ENCODE measurements at regions of chr4 and their contacts with region 1.

Region 1: DNA sequence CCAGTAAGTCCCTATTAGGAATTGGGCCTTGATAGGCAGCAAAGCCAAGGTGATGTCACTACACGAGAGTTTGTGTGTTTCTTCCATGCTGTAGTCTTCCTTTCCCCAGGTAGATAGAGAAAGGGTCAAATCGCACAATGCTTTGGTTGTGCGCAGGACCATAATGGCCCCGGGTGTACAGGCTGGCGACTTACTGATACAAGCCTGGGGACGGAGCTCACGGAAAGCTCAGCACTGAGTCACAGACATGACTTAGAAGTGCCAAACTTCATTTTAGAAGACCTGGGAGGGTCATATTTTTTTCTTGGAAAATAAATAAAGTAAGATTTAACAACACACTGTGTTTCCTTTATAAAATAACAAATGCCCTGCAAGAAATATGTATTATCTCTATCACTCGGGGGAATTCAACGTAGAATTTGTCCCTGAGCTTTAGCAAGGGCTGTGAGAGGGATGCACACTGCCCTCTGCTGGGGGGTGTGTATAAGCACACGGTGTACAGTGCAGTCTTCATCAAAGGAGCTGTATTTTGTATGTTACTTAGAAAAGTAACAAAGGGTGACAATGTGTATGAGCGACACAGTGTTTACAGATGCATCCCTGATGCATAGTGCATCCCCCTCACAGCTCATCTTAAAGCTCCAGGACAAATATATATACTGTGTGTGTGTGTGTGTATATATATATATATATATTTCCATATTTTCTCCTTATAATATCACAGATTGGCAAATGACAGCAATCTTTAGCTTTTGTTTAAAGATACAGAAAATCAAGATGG is 254.5 kb upstream of the VEGFC start:
- DNase-seq: peak; percentile 56

Region 2: DNA sequence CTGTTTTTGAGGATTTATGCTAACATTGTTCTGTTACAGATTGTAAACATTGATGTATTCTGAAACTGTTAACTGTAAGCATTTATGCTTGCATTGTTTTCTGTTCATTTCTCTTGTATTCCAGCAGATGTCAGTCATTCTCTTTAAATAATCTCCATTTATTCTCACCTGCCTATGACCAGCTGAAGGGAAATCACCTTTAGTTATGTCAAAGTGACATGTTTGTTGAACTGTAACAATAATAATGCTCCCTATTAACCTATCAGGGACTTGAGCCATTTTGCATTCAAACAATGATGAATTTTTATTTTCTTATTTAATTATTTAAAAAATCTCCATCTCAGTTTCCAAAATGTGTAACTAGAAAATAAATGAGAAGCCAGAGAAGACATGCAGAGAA is 669.5 kb before region 1 on chr4:
- CTCF ChIA-PET with region 1: interaction called, 23 read pairs
- POLR2A ChIA-PET with region 1: no interaction called
- DNase-seq: peak; percentile 10

Region 3: DNA sequence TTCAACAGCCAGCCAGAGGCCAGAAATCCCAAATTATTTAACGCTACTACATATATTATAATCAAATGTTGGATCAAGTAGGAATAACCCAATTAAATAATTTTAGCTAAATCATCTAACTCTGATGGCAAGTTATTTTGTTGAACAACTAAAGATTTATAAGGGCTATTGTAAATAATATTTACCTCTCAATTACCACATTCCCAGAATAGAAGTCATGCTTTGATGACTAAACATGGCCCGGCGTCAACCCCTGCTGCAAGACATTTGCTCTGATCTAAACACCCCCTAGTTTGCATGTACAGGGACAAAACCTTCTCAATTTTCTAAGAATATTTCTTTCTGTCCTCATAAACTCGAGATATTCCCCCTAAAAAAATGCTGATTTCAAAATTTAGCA is 268.8 kb before region 1 on chr4:
- CTCF ChIA-PET with region 1: interaction called, 12 read pairs
- POLR2A ChIA-PET with region 1: no interaction called
- DNase-seq: no peak

Region 4: DNA sequence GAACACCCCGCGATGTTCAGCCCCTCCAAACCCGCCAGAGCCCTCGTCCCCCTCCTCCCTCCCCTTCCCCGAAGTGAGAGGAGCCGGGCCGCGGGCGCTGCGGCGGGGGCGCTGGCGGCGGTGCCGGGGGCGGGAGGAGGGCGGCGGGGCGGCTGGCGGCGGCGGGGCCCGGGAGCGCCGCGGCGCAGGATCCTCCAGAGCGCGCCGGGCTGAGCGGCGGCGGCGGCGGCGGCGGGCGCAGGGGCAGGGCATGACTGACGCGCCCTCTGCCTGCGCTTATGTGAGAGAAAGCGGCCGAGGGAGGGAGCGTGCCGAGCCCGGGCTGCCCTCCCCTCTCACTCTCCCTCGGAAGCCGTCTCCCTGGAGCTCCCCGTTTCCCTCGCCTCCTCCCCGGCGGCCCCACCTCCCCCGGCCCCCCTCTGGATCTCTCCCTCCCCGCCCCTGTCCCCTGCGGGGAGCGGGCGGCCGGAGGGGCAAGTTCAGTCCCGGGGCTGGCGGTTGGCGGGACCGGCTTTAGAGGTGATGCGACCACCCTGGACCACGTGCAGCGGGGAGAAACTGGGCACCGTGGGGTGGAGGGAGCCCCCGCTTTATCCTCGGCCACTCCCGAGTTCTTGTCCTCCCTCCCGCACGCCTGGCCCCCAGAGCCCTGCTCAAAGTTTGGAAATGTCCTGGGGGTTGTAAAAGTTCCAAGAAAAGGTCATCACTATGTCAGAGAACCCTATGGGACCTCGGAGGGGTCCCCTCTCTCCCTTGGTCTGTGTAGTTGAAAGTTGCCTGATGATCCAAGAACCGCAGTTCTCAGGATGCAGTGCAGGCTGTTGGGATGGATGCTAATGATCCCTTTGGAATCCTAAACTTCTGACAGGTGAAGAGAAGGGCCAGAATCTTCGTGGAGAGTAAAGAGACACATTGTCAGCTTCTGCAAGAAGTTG is 254.3 kb before region 1 on chr4 and contains the start of gene VEGFC:
- CTCF ChIA-PET with region 1: interaction called, 15 read pairs
- POLR2A ChIA-PET with region 1: no interaction called
- DNase-seq: peak; percentile 69

Region 5: GRCh38 chr4:176824645-176825366 is 222.5 kb before region 1 on chr4:
- CTCF ChIA-PET with region 1: no interaction called
- POLR2A ChIA-PET with region 1: no interaction called
- DNase-seq: no peak

Region 6: DNA sequence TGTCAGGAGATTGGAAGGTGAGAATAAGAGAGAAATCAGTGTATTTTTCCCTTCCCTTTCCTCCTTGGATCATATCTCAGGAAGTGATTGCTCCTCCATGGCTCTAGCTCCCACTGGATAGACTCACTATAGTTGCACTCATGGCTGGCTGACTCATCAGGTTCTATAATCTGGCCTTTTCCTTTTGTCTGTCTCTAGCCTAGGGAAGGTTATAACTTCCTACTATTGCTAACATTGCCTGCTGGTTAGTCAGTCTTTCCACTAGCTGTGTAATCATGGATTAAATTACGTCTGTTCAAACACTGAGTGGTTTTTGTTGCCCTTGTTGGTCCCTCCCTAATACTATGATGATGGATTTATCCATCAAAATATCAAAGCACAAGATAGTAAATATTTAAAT is 59.0 kb before region 1 on chr4:
- CTCF ChIA-PET with region 1: no interaction called
- POLR2A ChIA-PET with region 1: no interaction called
- DNase-seq: no peak

Region 7: DNA sequence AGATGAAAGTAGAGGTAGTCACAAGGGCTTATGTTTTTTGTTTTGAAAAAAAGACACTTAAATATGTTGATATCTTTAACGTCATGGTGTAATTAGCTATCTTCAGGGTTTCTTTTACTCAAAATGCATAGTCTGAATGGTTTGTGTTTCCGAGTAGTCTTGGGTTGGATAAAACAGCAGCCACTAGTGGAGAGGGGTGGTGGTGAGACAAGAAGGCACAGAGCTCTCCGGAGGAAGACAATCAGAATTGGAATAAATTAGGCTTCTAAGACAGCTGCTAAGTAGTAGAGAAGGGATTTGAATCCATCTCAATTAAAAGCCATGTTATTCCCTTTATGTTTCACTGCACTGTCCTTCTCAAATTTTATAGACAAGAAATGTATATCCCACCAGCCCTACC is 14.1 kb before region 1 on chr4:
- CTCF ChIA-PET with region 1: interaction called, 13 read pairs
- POLR2A ChIA-PET with region 1: no interaction called
- DNase-seq: peak; percentile 9

Region 8: DNA sequence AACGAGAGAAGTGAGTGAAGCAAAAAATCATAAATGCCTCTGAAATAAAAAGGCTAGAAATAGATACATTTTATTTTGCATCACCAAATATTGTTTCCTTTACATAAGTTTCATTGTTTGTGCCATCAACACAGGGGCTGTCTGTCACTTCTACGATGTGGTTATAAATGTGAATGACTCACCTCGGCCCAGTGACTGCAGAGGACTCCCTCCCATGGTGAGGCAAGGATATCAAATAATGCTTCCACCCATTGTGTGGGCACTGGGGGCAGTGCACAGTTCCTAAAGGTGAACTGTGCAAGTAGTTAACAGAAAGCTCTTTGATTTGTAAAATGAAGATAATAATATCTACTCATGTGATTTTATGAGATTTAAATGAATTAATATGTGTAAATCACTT is 32.1 kb after region 1 on chr4:
- CTCF ChIA-PET with region 1: no interaction called
- POLR2A ChIA-PET with region 1: no interaction called
- DNase-seq: peak; percentile 10

Measured in HEK293T (cell line).